Activated naive CD4-positive, alpha-beta T cell treated with anti-CD3 and anti-CD28 coated beads for 36 hours (primary cell): ENCODE measurements at regions of chr2 and their contacts with region 1.

Region 1: DNA sequence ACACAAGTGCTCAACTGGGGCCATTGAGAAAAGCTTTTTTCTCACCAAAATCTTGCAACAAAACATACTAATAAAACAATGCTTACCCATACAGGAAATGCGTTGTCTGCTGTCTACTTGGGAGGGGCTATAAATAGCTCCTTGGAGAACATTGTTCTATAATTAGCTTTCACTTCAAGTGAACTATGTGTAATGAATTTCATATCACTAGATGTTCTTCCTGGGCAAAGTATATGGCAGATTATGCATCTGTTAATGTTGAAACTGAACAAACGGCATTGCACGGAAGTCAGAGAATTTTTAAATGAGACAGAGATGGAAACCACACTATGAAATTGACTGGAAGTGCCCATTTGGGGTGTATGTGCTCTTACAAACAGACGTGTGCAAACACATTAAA is 6.4 kb upstream of the NPAS2 start:
- DNase-seq: peak; percentile 17
- H3K4me3 Mint-ChIP-seq: peak overlapping the region; percentile 6
- H3K27ac Mint-ChIP-seq: peak overlapping the region; percentile 37
- H3K4me1 Mint-ChIP-seq: peaks cover 38% of the 10 kb centered on the region
- H3K27me3 Mint-ChIP-seq: peaks cover 6% of the 10 kb centered on the region

Region 2: DNA sequence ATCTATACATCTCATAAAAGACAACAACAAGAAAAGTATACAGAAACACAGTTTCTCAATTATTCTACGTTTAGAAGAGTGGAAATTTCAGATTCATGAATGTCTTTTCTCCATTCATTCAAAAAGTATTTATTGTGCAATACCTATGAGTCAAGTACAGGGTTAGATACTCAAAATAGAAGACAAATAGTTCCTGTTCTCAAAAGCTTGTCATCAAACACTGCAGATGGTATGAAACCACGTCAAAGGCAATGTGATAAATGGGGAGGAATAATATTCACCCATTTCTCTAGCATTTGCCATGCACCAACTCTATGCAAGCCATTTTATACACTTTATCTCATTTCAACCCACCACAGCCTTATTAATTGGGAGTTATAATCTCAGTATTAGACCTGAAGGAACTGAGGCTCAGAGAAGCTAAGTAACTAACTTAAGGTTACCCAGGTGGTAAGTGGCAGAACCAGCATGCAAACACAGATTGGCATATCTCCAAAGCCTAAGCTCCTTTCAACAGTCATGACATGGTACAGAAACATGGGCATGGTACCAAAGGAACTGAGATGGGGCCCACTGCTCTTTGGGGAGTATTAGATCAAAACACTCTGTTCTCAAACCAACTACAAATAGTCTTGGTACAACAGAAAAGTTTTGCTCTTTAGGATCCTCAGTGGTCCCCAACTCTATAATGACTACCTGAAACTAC is 60.7 kb before region 1 on chr2:
- CTCF ChIA-PET with region 1: no interaction called
- intact Hi-C with region 1: loop called (anchors 1 kb)
- DNase-seq: no peak
- H3K4me3 Mint-ChIP-seq: no peak overlapping the region
- H3K27ac Mint-ChIP-seq: peak overlapping the region; percentile 51
- H3K4me1 Mint-ChIP-seq: peaks cover 24% of the 10 kb centered on the region
- H3K27me3 Mint-ChIP-seq: peaks cover 2% of the 10 kb centered on the region

Region 3: GRCh38 chr2:100870652-100871531 is 57.4 kb after region 1 on chr2:
- CTCF ChIA-PET with region 1: no interaction called
- intact Hi-C with region 1: loop called (anchors 5 kb)
- DNase-seq: no peak
- H3K4me3 Mint-ChIP-seq: no peak overlapping the region
- H3K27ac Mint-ChIP-seq: no peak overlapping the region
- H3K4me1 Mint-ChIP-seq: peaks cover 5% of the 10 kb centered on the region
- H3K27me3 Mint-ChIP-seq: no peaks in the 10 kb centered on the region